CD8-positive, alpha-beta T cell (primary cell): ENCODE measurements at regions of chr11 and their contacts with region 1.

Region 1: GRCh38 chr11:62542750-62543567 is 3.6 kb downstream of the AHNAK start:
- DNase-seq: peak in 8 of 9 experiments; percentile 60 to 91 (median 76)
- ATAC-seq: peak; percentile 64
- H3K4me3 ChIP-seq: peak overlapping the region; percentile 52 to 74
- H3K4me3 Mint-ChIP-seq: peak overlapping the region; percentile 94
- H3K27ac ChIP-seq: peak overlapping the region; percentile 79 to 85
- H3K27ac Mint-ChIP-seq: peak overlapping the region; percentile 93
- H3K4me1 ChIP-seq: peaks cover 84% of the 10 kb centered on the region
- H3K4me1 Mint-ChIP-seq: peaks cover 73% of the 10 kb centered on the region
- H3K27me3 ChIP-seq: no peaks in the 10 kb centered on the region
- H3K27me3 Mint-ChIP-seq: no peaks in the 10 kb centered on the region
- CTCF ChIP-seq: peak; percentile 94

Region 2: DNA sequence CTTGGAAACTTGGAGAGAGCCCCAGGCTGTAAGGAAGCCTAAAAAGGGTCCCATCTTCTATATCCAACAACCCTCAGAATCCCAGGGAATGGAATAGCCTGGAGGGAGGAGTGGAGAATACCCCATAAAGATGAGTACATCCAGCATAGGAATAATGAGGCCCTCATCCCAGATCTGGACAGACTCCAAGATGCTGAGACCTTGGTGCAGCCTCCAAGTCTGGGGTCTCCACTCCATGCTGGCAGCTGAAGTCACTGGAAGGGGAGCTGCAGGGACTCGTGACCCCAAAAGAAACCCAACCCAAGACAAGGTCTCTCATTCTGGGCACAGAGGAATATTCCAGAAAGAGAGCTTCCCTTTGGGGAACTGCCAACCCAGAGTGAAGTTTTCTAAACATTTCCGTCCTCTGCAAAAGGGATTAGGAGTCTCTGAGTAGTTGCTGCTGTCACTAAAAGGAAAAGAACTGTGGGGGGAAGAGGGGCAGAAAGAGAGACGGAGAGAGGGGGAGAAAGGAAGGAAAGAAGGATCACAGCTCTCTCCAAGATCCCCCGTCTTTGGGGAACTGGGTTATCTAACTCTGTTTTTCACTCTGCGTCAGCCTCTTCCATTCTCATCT is 123.5 kb before region 1 on chr11:
- CTCF ChIA-PET with region 1: interaction called, 79 read pairs
- POLR2A ChIA-PET with region 1: interaction called, 7 read pairs
- intact Hi-C with region 1: loop called in 1 of 2 experiments (anchors 1 kb)
- DNase-seq: no peak
- ATAC-seq: no peak
- H3K4me3 ChIP-seq: no peak overlapping the region
- H3K4me3 Mint-ChIP-seq: no peak overlapping the region
- H3K27ac ChIP-seq: no peak overlapping the region
- H3K27ac Mint-ChIP-seq: no peak overlapping the region
- H3K4me1 ChIP-seq: peaks cover 1% of the 10 kb centered on the region
- H3K4me1 Mint-ChIP-seq: peaks cover 8% of the 10 kb centered on the region
- H3K27me3 ChIP-seq: no peaks in the 10 kb centered on the region
- H3K27me3 Mint-ChIP-seq: no peaks in the 10 kb centered on the region
- CTCF ChIP-seq: no peak

Region 3: GRCh38 chr11:62567018-62567633 is 24.2 kb after region 1 on chr11:
- CTCF ChIA-PET with region 1: interaction called, 265 read pairs
- POLR2A ChIA-PET with region 1: interaction called, 6 read pairs
- intact Hi-C with region 1: no loop called
- DNase-seq: no peak
- ATAC-seq: no peak
- H3K4me3 ChIP-seq: no peak overlapping the region
- H3K4me3 Mint-ChIP-seq: no peak overlapping the region
- H3K27ac ChIP-seq: no peak overlapping the region
- H3K27ac Mint-ChIP-seq: peak overlapping the region; percentile 57
- H3K4me1 ChIP-seq: peaks cover 8% of the 10 kb centered on the region
- H3K4me1 Mint-ChIP-seq: peaks cover 35% of the 10 kb centered on the region
- H3K27me3 ChIP-seq: no peaks in the 10 kb centered on the region
- H3K27me3 Mint-ChIP-seq: no peaks in the 10 kb centered on the region
- CTCF ChIP-seq: no peak